IMR-90 (cell line): ENCODE measurements at regions of chr3 and their contacts with region 1.

Region 1: GRCh38 chr3:3200632-3201212 is 21.2 kb upstream of the CRBN start:
- DNase-seq: peak; percentile 62
- ATAC-seq: peak; percentile 93
- H3K4me3 ChIP-seq: no peak overlapping the region
- H3K27ac ChIP-seq: no peak overlapping the region
- H3K4me1 ChIP-seq: no peaks in the 10 kb centered on the region
- H3K27me3 ChIP-seq: no peaks in the 10 kb centered on the region
- CTCF ChIP-seq: peak; percentile 68
- POLR2A ChIP-seq: no peak
- RAD21 ChIP-seq: peak; percentile 64

Region 2: DNA sequence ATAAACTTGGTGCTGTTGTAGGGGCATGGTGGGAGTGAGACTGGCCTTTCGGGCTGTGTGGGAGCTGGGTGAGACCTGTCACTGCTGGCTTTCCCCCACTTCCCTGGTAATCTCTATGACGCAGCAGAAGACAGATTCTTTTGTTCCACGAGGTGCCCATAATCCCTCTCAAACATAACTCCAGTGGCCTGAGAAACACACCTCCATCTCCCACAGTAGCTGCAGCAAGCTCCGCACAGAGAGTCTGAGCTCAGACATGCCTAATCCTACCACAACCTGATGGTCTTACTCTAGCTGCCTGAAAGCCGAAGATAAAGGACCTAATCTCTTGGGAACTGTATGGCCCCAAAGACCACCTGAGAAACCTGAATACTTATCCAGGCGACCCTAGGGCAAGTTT is 204.4 kb after region 1 on chr3:
- CTCF ChIA-PET with region 1: no interaction called
- POLR2A ChIA-PET with region 1: no interaction called
- dilution Hi-C with region 1: no loop called
- in situ Hi-C with region 1: no loop called
- intact Hi-C with region 1: no loop called
- DNase-seq: no peak
- ATAC-seq: no peak
- H3K4me3 ChIP-seq: no peak overlapping the region
- H3K27ac ChIP-seq: no peak overlapping the region
- H3K4me1 ChIP-seq: no peaks in the 10 kb centered on the region
- H3K27me3 ChIP-seq: no peaks in the 10 kb centered on the region
- CTCF ChIP-seq: no peak
- POLR2A ChIP-seq: no peak
- RAD21 ChIP-seq: no peak

Region 3: GRCh38 chr3:4011166-4011565 is 810.4 kb after region 1 on chr3:
- CTCF ChIA-PET with region 1: no interaction called
- POLR2A ChIA-PET with region 1: no interaction called
- dilution Hi-C with region 1: no loop called
- in situ Hi-C with region 1: no loop called
- intact Hi-C with region 1: loop called (anchors 10 kb)
- DNase-seq: no peak
- ATAC-seq: no peak
- H3K4me3 ChIP-seq: no peak overlapping the region
- H3K27ac ChIP-seq: no peak overlapping the region
- H3K4me1 ChIP-seq: no peaks in the 10 kb centered on the region
- H3K27me3 ChIP-seq: no peaks in the 10 kb centered on the region
- CTCF ChIP-seq: no peak
- POLR2A ChIP-seq: no peak
- RAD21 ChIP-seq: no peak

Region 4: GRCh38 chr3:4271834-4272233 is 1071.1 kb after region 1 on chr3:
- CTCF ChIA-PET with region 1: interaction called, 6 read pairs
- POLR2A ChIA-PET with region 1: no interaction called
- dilution Hi-C with region 1: loop called (anchors 25 kb)
- in situ Hi-C with region 1: no loop called
- intact Hi-C with region 1: loop called (anchors 1 kb)
- DNase-seq: peak; percentile 38
- ATAC-seq: peak; percentile 81
- H3K4me3 ChIP-seq: no peak overlapping the region
- H3K27ac ChIP-seq: no peak overlapping the region
- H3K4me1 ChIP-seq: no peaks in the 10 kb centered on the region; the same call in 1 of the 2 replicates
- H3K27me3 ChIP-seq: no peaks in the 10 kb centered on the region
- CTCF ChIP-seq: peak; percentile 45
- POLR2A ChIP-seq: no peak
- RAD21 ChIP-seq: peak; percentile 21; the same call in 1 of the 2 replicates

Region 5: DNA sequence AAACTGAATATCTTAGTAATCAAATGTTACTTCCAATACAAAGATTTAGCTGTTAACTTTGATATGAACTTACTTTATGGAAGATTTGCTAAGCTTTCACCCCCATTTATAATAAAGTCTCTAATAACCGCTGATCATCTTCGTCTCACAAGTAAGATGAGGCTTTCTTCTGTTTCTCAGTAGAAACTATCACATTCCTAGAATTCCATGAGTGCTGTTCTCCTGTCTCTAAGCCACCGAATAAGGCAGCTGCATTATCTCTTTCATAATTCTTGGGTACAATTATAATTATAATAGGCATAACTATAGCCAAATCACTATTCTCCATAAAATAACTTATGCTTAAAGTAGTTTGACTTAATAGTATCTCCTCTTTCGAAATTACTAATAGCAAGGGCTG is 1084.1 kb after region 1 on chr3:
- CTCF ChIA-PET with region 1: interaction called, 5 read pairs
- POLR2A ChIA-PET with region 1: no interaction called
- dilution Hi-C with region 1: loop called (anchors 25 kb)
- in situ Hi-C with region 1: loop called (anchors 10 kb)
- intact Hi-C with region 1: loop called (anchors 1 kb)
- DNase-seq: no peak
- ATAC-seq: peak; percentile 35; the same call in 1 of the 2 replicates
- H3K4me3 ChIP-seq: no peak overlapping the region
- H3K27ac ChIP-seq: no peak overlapping the region
- H3K4me1 ChIP-seq: no peaks in the 10 kb centered on the region
- H3K27me3 ChIP-seq: no peaks in the 10 kb centered on the region
- CTCF ChIP-seq: no peak
- POLR2A ChIP-seq: no peak
- RAD21 ChIP-seq: no peak

Region 6: GRCh38 chr3:4290272-4290893 is 1089.7 kb after region 1 on chr3:
- CTCF ChIA-PET with region 1: interaction called, 7 read pairs
- POLR2A ChIA-PET with region 1: no interaction called
- dilution Hi-C with region 1: loop called (anchors 25 kb)
- in situ Hi-C with region 1: loop called (anchors 10 kb)
- intact Hi-C with region 1: loop called (anchors 1 kb)
- DNase-seq: peak; percentile 48
- ATAC-seq: peak; percentile 92
- H3K4me3 ChIP-seq: no peak overlapping the region
- H3K27ac ChIP-seq: no peak overlapping the region
- H3K4me1 ChIP-seq: no peaks in the 10 kb centered on the region
- H3K27me3 ChIP-seq: no peaks in the 10 kb centered on the region
- CTCF ChIP-seq: peak; percentile 86
- POLR2A ChIP-seq: no peak
- RAD21 ChIP-seq: peak; percentile 72

Region 7: DNA sequence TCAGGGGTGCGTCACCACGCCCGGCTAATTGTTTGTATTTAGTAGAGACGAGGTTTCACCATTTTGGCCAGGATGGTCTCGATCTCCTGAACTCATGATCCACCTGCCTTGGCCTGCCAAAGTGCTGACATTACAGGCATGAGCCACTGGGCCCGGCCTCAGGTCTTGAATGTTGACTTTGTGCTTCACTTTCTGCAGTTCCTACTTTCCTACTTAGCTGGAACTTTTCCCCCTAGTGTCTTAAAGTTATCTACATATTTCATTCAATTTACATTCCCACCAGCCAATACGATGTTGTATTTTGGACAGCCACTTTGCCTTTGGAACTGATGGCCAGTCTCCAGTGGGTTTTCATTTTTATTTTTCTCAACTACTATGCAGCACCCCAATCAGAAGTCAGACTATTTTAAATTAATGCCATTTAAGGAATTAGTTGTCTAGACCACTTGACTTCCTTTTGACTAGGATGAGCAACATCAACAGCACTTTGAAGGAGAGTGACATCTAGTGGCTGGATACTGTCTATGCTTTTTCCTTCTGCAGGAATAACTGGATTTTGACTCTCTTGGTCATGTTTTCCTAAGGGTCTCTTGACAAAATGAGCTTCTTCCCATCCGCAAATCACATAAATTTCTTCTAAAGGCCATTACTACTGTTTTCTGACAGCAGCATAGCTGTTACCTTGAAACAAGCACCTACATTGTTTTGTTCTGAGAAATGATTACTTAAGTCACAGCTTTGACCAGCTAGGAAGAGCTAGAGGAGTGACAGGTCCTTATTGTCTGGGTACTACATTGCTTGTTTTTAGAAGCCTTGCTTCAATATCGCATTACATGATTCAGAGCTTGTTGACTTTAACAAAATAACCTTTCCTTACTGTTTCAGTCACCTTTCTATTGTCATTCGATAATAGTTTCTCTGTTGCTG is 1432.6 kb after region 1 on chr3:
- CTCF ChIA-PET with region 1: no interaction called
- POLR2A ChIA-PET with region 1: no interaction called
- dilution Hi-C with region 1: no loop called
- in situ Hi-C with region 1: no loop called
- intact Hi-C with region 1: loop called (anchors 10 kb)
- DNase-seq: peak; percentile 72
- ATAC-seq: peak; percentile 92
- H3K4me3 ChIP-seq: no peak overlapping the region
- H3K27ac ChIP-seq: no peak overlapping the region
- H3K4me1 ChIP-seq: no peaks in the 10 kb centered on the region
- H3K27me3 ChIP-seq: no peaks in the 10 kb centered on the region
- CTCF ChIP-seq: peak; percentile 87
- POLR2A ChIP-seq: no peak
- RAD21 ChIP-seq: peak; percentile 85